ENCODE measurements at regions of chr15 and their contacts with region 1.

Region 1: DNA sequence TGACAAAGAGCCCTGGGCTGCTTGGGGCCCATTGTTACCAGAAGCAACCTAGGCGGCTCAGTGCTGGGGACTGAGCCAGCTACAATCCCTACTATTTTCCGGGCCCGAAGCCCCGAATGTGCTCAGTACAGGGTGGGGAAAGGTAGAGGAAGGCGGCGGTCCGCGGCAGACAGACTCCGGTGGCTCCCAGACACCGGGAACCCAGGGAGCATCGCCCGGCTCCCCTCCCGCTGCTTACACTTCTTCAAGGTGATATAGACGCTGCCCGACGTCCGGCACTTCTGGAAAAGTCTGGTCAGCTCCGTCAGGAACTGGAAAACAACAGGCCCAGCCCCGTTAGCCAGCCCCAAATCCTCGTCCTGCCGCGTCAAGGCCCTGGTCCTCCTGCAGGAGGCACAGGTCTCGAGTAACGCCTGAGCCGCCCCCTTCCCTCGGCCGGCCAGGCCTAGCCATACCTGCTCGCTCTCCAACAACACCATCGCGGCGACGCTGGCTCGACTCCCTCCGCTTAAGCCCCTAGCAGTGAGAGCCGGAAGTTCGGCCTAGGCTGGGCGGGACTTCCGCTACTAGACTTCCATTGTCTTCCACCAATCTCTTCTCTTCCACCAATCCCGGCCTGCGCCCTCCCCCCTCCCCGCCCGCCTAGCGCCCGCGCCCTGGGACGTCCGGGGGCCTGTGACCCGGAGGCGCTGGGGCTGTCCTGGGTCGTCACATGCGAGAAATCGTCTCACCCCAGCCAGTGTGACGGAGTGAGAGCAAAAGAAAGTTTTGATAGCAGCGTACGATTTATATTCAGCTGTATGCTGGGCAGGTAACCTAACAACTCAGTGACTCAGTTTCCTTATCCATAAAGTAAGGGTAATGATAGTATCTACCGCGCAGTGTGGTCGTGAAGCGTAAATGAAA is at the start of gene SRP14:
- DNase-seq: peak; percentile 97
- H3K4me3 Mint-ChIP-seq: peak within 1 kb of the TSS; percentile 99
- H3K27ac Mint-ChIP-seq: peak within 1 kb of the TSS; percentile 97
- H3K4me1 Mint-ChIP-seq: peaks cover 37% of the 10 kb centered on the region
- H3K27me3 Mint-ChIP-seq: no peaks in the 10 kb centered on the region
- total RNA-seq, gene SRP14: 153 and 155 TPM in 2 replicates

Region 2: DNA sequence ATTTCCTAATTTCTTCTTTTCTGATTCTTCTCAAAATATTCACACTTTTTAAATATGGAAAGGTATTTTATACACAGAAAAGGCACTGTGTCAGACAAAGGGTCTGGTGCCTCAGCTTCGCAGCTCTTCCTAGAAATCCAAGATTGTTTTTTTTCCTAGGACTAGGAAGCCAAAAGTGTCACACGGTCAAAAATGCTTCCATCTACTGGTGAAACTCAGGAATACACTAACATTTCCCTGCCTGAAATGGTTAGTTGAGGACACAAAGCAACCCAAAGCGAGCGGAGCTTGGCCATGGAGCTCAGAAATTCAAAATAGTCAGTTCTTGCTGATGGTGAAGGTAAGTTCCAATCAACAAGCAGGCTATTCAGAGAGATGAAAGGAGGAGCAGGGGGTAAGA is 1047.8 kb before region 1 on chr15:
- intact Hi-C with region 1: no loop called
- DNase-seq: no peak
- H3K4me3 Mint-ChIP-seq: no peak overlapping the region
- H3K27ac Mint-ChIP-seq: no peak overlapping the region
- H3K4me1 Mint-ChIP-seq: no peaks in the 10 kb centered on the region
- H3K27me3 Mint-ChIP-seq: peaks cover 6% of the 10 kb centered on the region

Region 3: DNA sequence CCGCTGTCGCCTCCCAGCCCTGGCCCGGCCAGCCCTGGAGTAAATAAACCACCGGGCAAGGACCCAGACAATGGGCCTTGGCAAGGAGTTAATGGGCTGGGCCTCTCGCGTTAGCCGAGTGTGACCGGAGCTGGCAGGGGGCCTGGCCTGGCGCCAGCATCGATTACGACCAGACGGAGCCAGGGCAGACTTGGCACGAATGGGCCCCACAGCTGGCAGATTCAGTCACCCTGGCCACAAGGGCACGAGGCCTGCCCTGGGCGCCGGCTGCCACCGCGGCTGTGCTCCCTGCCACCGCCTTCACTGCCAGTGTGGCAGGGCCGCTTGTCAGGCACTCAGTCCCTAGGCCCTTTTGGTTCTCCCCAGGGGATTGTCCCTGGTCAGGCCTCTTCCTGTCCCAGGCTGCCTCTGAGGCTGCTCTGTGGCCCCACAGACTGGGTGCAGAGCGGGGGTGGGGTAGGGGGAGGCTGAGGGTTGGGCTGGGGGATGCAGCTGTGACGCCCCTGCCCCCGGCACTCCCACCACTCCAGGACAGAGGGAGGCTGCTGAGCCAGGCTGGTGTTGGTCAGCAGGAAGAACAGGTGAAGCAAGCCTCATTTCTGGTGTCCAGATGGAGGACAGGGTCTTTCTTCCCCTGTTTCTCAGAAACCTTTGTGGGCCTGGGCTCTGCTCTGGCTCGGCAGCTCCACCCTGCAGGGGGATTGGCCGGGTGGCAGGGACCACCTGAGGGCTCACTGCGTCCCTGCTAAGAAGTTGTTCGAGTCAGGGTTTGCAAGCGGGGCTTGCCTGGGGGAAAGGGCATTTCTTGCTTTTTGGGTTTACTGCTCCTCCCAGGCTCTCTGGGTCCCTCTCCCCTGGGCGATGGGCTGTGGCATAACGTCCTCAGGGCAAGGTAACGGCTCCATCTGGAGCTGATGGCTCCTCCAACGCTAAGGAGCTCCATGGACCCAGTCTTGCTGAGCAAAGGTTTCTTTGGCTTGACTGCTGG is 30.6 kb after region 1 on chr15:
- intact Hi-C with region 1: no loop called
- DNase-seq: peak; percentile 54
- H3K4me3 Mint-ChIP-seq: no peak overlapping the region
- H3K27ac Mint-ChIP-seq: no peak overlapping the region
- H3K4me1 Mint-ChIP-seq: peaks cover 11% of the 10 kb centered on the region
- H3K27me3 Mint-ChIP-seq: no peaks in the 10 kb centered on the region

Region 4: DNA sequence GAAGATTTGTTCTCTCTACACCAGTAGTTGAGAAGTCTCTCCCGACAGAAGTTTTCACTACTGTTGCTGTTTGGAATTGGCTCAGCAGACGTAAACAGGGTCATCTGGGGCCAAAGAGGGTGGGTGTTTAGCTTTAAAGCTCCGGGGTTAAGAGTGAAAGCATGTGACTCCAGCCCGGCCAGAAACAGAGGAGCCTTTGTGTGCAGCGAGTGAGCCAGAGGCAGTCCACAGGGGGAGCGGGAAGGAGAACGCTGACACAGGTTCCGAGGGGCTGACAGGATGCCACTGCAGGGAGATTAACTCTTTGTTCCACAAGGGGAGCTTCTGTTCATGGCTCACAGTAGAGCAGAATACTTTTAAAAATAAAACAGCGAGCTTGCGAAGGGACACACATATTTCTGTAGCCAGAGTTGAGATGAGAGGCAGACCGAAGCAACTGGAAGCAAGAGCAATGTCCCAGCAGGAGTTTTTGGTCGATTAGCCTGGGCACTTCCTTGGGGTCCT is 42.9 kb after region 1 on chr15:
- intact Hi-C with region 1: no loop called
- DNase-seq: peak; percentile 61
- H3K4me3 Mint-ChIP-seq: peak overlapping the region; percentile 50
- H3K27ac Mint-ChIP-seq: no peak overlapping the region
- H3K4me1 Mint-ChIP-seq: peaks cover 38% of the 10 kb centered on the region
- H3K27me3 Mint-ChIP-seq: peaks cover 19% of the 10 kb centered on the region

Region 5: GRCh38 chr15:40108855-40109735 is 70.2 kb after region 1 on chr15 and contains the start of gene BMF:
- intact Hi-C with region 1: loop called (anchors 2 kb)
- DNase-seq: peak; percentile 99
- H3K4me3 Mint-ChIP-seq: peak within 1 kb of the TSS; percentile 95
- H3K27ac Mint-ChIP-seq: peak within 1 kb of the TSS; percentile 85
- H3K4me1 Mint-ChIP-seq: peaks cover 53% of the 10 kb centered on the region
- H3K27me3 Mint-ChIP-seq: peaks cover 10% of the 10 kb centered on the region
- total RNA-seq, gene BMF: 8.4 and 9.1 TPM in 2 replicates